Motor neuron (in vitro differentiated cells): ENCODE measurements at regions of chr17 and their contacts with region 1.

Region 1: DNA sequence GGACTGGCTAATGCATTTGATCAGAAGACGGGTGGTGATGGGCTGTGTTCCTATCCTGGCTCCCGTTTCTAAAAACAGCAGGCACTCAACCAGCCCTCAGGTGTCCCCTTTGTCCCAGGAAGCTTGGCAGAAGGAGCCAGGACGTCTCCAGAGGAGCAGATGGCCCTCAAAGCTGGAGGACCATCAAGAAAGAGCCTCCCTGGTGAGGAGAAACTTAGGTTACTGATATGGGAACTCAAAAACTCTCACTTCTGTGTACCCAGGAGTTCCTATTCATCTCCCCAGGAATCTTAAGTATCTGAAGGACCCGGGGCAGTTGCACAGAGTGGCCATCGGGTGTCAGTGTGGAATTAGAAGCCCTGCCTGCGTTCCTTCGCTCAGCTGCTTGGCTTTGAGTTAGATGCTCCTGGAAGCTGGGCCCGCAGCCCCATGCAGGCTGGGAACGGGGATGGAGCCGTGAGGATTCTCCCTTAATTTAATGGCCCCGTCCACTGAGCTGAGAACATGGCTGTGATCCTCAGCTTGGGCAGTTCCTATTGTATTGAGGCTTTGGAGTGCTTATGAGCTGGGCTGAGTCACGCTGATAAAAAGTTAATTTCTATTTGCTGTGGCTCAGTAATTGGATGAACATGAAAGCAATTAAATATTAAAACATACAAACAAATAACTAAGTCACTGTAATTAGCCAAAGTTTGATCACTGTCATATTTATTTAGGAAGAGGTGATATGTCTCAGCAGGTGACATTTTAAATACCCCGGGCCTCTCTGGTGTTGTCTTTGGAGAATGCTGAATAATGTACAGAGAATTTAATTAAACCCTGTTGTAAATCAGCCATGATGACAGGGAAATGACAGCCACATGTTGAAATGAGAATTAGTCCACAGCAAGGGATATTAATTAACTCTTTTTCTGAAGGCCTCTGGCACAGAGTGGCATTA is 402.1 kb downstream of the SEC14L1 start:
- ATAC-seq: peak; percentile 71 to 91 (median 86)
- H3K4me3 ChIP-seq: no peak overlapping the region
- H3K27ac ChIP-seq: no peak overlapping the region
- H3K4me1 ChIP-seq: peaks cover 42 to 47% of the 10 kb centered on the region in 2 donors

Region 2: DNA sequence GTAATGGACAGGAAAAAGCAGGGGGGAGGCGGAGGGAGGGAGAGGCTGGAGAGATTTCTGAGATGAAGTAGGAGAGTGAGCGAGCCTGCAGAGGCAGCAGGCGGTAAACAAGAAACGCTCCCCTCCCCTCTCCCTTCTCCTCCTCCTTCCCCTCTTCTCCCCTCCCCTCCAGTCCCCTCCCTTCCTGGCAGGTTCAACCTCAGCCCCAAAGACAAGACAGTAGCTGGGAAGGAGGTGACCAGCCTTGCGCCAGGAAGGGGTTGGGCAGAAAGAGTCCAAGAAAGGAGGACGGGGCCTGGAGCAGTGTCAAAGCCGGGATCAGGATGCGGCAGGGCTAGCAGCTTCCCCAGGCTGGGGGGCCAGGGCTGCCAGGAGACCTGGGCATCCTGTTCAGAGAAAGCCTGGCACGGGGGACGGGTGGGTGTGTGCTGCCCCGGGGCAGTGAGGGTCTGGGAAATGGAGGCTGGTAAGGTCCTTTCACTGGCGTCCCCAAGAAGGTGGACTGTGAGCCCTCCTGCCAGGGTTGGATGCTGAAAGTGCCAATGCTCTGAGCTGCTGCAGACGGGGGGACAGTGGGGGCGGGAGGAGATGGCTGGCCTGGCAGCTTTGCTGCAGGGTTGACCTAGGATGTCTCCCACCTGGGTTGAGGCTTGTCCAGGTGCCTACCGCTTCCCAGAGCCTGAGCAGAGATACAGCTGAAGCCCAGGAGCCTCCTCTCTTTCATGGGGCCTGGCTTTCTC is 154.1 kb after region 1 on chr17:
- in situ Hi-C with region 1: no loop called
- ATAC-seq: peak in 7 of 8 experiments; percentile 30 to 75 (median 73)
- H3K4me3 ChIP-seq: peak overlapping the region in 3 of 5 donors; percentile 2 to 19 (median 15)
- H3K27ac ChIP-seq: peak overlapping the region; percentile 77 to 91
- H3K4me1 ChIP-seq: peaks cover 55 to 57% of the 10 kb centered on the region in 2 donors

Region 3: GRCh38 chr17:77957857-77958715 is 415.3 kb after region 1 on chr17 and contains the start of gene TNRC6C:
- in situ Hi-C with region 1: loop called in 2 of 9 experiments (anchors 25 kb)
- ATAC-seq: peak; percentile 87 to 94 (median 89)
- H3K4me3 ChIP-seq: peak within 1 kb of the TSS; percentile 67 to 97 (median 89)
- H3K27ac ChIP-seq: peak within 1 kb of the TSS; percentile 80 to 90
- H3K4me1 ChIP-seq: peaks cover 21 to 35% of the 10 kb centered on the region in 2 donors
- total RNA-seq, gene TNRC6C: 5.6 to 20.6 (median 16.1) TPM

Region 4: DNA sequence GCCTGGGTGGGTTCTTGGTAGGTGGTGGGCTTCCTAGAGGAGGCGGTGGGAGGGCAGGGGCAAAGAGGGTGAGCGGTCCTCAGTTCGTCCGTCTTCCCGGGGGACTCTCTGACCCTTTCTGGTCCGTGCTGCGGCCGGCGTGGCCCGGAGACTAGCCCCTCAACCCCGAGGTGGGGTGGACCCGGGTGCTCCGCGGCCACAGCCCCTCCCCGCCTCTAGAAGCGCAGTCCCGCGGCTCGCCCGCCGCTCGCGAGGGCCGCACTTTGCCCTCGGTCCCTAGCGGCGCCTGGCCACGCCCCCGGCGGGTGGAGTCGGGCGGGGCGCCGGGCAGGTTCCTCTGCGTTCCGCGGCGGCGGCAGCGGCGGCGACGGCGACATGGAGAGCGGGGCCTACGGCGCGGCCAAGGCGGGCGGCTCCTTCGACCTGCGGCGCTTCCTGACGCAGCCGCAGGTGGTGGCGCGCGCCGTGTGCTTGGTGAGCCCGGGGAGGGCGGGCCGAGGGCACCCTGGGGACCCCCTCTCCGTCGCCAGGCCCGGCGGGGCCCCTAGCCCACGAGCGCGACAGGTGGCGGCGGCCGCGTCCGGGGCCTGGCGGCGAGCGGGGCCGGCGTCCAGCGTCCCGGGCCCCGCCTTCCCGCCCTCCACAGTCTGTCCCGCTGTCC is 625.6 kb after region 1 on chr17 and contains the start of gene SYNGR2:
- in situ Hi-C with region 1: no loop called
- ATAC-seq: peak; percentile 68 to 87 (median 80)
- H3K4me3 ChIP-seq: peak within 1 kb of the TSS; percentile 54 to 81 (median 70)
- H3K27ac ChIP-seq: no peak within 1 kb of the TSS
- H3K4me1 ChIP-seq: peaks cover 0 to 5% of the 10 kb centered on the region in 2 donors
- total RNA-seq, gene SYNGR2: 2.6 to 61.6 (median 8.2) TPM